Naive thymus-derived CD4-positive, alpha-beta T cell (primary cell): ENCODE measurements at regions of chr1 and their contacts with region 1.

Region 1: GRCh38 chr1:175154629-175155472 is 37.7 kb downstream of the KIAA0040 start:
- DNase-seq: peak; percentile 32 to 77 (median 63)
- ATAC-seq: peak; percentile 78
- H3K4me3 ChIP-seq: no peak overlapping the region
- H3K4me3 Mint-ChIP-seq: peak overlapping the region in 1 of 10 donors; percentile 7
- H3K27ac ChIP-seq: no peak overlapping the region
- H3K27ac Mint-ChIP-seq: no peak overlapping the region
- H3K4me1 ChIP-seq: peaks cover 0 to 9% of the 10 kb centered on the region in 2 donors
- H3K4me1 Mint-ChIP-seq: peaks cover 8 to 34% (median 20%) of the 10 kb centered on the region in 7 donors
- H3K27me3 ChIP-seq: no peaks in the 10 kb centered on the region
- H3K27me3 Mint-ChIP-seq: peaks cover 26 to 40% (median 38%) of the 10 kb centered on the region in 5 donors

Region 2: DNA sequence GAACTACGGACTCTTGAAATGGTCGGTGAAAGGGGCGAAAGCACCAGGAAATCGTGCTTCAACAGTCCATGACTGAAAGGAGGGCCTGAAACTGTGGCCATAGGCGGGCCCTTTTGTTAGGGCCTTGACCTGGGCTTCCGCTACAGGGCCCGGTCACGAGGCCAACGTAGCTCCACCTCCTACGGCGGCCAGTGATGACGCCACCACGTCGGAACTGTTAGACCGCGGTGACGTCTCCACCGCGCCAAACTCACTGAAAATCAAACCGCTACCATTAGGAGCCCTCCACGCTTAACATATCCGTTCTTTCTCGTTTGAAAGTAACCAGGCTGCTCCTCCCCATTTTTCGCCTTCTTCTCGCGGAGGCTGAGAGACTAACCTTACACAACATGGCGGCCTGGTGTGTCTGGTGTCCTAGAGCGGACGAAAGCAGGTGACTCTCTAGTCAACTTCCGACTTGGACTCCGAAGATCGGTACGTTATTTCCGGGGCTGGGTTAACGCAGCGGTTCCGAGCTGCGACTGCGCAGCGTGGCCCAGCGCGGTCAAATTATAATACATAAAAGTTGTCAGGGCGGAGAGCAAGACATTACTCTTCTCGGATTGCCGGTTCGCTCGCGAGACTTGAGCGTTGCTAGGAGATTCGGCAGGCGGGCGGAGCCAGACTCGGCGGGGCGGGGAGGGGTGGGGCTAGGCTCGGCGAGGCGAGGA is 155.5 kb before region 1 on chr1:
- CTCF ChIA-PET with region 1: no interaction called
- POLR2A ChIA-PET with region 1: no interaction called
- intact Hi-C with region 1: no loop called
- DNase-seq: peak; percentile 89 to 99 (median 98)
- ATAC-seq: peak; percentile 88
- H3K4me3 ChIP-seq: peak overlapping the region; percentile 72
- H3K4me3 Mint-ChIP-seq: no peak overlapping the region
- H3K27ac ChIP-seq: peak overlapping the region; percentile 99
- H3K27ac Mint-ChIP-seq: no peak overlapping the region
- H3K4me1 ChIP-seq: peaks cover 10 to 18% of the 10 kb centered on the region in 2 donors
- H3K4me1 Mint-ChIP-seq: peaks cover 34 to 43% (median 39%) of the 10 kb centered on the region in 7 donors
- H3K27me3 ChIP-seq: no peaks in the 10 kb centered on the region
- H3K27me3 Mint-ChIP-seq: no peaks in the 10 kb centered on the region

Region 3: DNA sequence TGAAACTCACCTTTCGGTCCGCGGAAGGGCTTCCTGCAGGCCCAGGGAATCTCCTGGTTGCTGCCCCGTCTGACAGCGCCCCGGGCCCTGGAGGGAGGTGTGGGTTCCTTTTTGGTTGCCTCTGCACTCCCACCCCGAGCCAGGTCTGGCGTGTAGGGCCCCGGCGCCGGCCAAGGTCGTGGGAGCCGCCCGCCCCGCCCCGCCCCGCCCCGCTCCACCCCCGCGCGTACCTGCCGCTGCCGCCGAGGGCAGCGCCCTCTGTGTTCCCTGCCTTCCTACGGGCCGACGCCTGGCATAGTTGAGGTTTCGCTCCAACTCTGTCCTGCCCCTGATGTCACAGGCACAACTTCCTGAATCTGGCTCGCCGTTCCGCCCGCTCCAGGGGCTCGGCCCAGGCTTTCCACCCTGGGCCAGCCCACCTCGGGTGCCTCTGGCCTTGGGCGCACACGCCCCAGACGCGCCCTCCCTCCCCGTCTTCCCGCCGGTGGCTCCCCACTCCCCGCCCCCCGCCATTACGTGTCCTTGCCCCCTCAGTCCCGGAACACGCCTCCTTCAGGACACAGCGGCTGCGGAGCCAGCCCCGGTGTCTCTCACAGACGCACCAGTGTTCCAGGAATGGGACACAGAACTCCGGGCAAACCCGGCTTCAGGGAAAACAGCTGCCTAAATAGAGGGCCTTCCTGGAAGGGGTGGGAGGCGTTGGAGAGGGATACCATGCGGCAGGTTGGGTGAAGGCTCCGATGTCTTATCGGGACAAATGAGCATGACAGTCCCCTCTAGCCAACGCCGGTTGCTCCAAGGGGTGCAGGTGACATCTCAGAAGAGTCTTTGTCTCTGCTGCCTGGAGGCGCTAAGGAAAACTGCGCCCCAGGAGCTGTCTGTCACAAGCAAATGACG is 38.0 kb after region 1 on chr1 and contains the start of gene KIAA0040:
- CTCF ChIA-PET with region 1: interaction called, 12 read pairs
- POLR2A ChIA-PET with region 1: no interaction called
- intact Hi-C with region 1: loop called (anchors 1 to 2 kb)
- DNase-seq: peak; percentile 25 to 66 (median 40)
- ATAC-seq: peak; percentile 78
- H3K4me3 ChIP-seq: peak within 1 kb of the TSS; percentile 90
- H3K4me3 Mint-ChIP-seq: peak within 1 kb of the TSS; percentile 89 to 100 (median 97)
- H3K27ac ChIP-seq: peak within 1 kb of the TSS; percentile 80
- H3K27ac Mint-ChIP-seq: peak within 1 kb of the TSS; percentile 73 to 97 (median 92)
- H3K4me1 ChIP-seq: peaks cover 38 to 43% of the 10 kb centered on the region in 2 donors
- H3K4me1 Mint-ChIP-seq: peaks cover 40 to 67% (median 53%) of the 10 kb centered on the region in 7 donors
- H3K27me3 ChIP-seq: no peaks in the 10 kb centered on the region
- H3K27me3 Mint-ChIP-seq: no peaks in the 10 kb centered on the region
- total RNA-seq, gene KIAA0040: 21.7 to 88.1 (median 27.0) TPM

Region 4: GRCh38 chr1:175319418-175320230 is 164.8 kb after region 1 on chr1:
- CTCF ChIA-PET with region 1: interaction called, 182 read pairs
- POLR2A ChIA-PET with region 1: interaction called, 4 read pairs
- intact Hi-C with region 1: loop called (anchors 1 kb)
- DNase-seq: peak; percentile 45 to 71 (median 62)
- ATAC-seq: peak; percentile 91
- H3K4me3 ChIP-seq: no peak overlapping the region
- H3K4me3 Mint-ChIP-seq: peak overlapping the region in 5 of 10 donors; percentile 8 to 44 (median 42)
- H3K27ac ChIP-seq: no peak overlapping the region
- H3K27ac Mint-ChIP-seq: no peak overlapping the region
- H3K4me1 ChIP-seq: peaks cover 4 to 5% of the 10 kb centered on the region in 2 donors
- H3K4me1 Mint-ChIP-seq: peaks cover 4 to 29% (median 18%) of the 10 kb centered on the region in 7 donors
- H3K27me3 ChIP-seq: no peaks in the 10 kb centered on the region
- H3K27me3 Mint-ChIP-seq: peaks cover 0 to 29% (median 5%) of the 10 kb centered on the region in 5 donors

Region 5: GRCh38 chr1:175434283-175434860 is 279.5 kb after region 1 on chr1:
- CTCF ChIA-PET with region 1: interaction called, 4 read pairs
- POLR2A ChIA-PET with region 1: no interaction called
- intact Hi-C with region 1: loop called (anchors 1 kb)
- DNase-seq: no peak
- ATAC-seq: no peak
- H3K4me3 ChIP-seq: no peak overlapping the region
- H3K4me3 Mint-ChIP-seq: no peak overlapping the region
- H3K27ac ChIP-seq: no peak overlapping the region
- H3K27ac Mint-ChIP-seq: no peak overlapping the region
- H3K4me1 ChIP-seq: no peaks in the 10 kb centered on the region
- H3K4me1 Mint-ChIP-seq: no peaks in the 10 kb centered on the region
- H3K27me3 ChIP-seq: no peaks in the 10 kb centered on the region
- H3K27me3 Mint-ChIP-seq: peaks cover 9 to 48% (median 34%) of the 10 kb centered on the region in 5 donors

Region 6: GRCh38 chr1:175824079-175824478 is 669.2 kb after region 1 on chr1:
- CTCF ChIA-PET with region 1: no interaction called
- POLR2A ChIA-PET with region 1: no interaction called
- intact Hi-C with region 1: loop called in 1 of 2 experiments (anchors 2 kb)
- DNase-seq: peak in 1 of 9 donors; percentile 1
- ATAC-seq: no peak
- H3K4me3 ChIP-seq: no peak overlapping the region
- H3K4me3 Mint-ChIP-seq: no peak overlapping the region
- H3K27ac ChIP-seq: no peak overlapping the region
- H3K27ac Mint-ChIP-seq: no peak overlapping the region
- H3K4me1 ChIP-seq: no peaks in the 10 kb centered on the region
- H3K4me1 Mint-ChIP-seq: no peaks in the 10 kb centered on the region
- H3K27me3 ChIP-seq: no peaks in the 10 kb centered on the region
- H3K27me3 Mint-ChIP-seq: peaks cover 9 to 30% (median 20%) of the 10 kb centered on the region in 5 donors

Region 7: GRCh38 chr1:176193023-176193422 is 1038.2 kb after region 1 on chr1:
- CTCF ChIA-PET with region 1: no interaction called
- POLR2A ChIA-PET with region 1: no interaction called
- intact Hi-C with region 1: no loop called
- DNase-seq: no peak
- ATAC-seq: no peak
- H3K4me3 ChIP-seq: no peak overlapping the region
- H3K4me3 Mint-ChIP-seq: peak overlapping the region in 3 of 10 donors; percentile 12 to 26 (median 23)
- H3K27ac ChIP-seq: no peak overlapping the region
- H3K27ac Mint-ChIP-seq: no peak overlapping the region
- H3K4me1 ChIP-seq: peaks cover 12 to 17% of the 10 kb centered on the region in 2 donors
- H3K4me1 Mint-ChIP-seq: peaks cover 45 to 96% (median 92%) of the 10 kb centered on the region in 7 donors
- H3K27me3 ChIP-seq: no peaks in the 10 kb centered on the region
- H3K27me3 Mint-ChIP-seq: no peaks in the 10 kb centered on the region

Region 8: GRCh38 chr1:176466514-176467220 is 1311.8 kb after region 1 on chr1:
- CTCF ChIA-PET with region 1: no interaction called
- POLR2A ChIA-PET with region 1: no interaction called
- intact Hi-C with region 1: loop called in 1 of 2 experiments (anchors 10 kb)
- DNase-seq: no peak
- ATAC-seq: no peak
- H3K4me3 ChIP-seq: no peak overlapping the region
- H3K4me3 Mint-ChIP-seq: no peak overlapping the region
- H3K27ac ChIP-seq: no peak overlapping the region
- H3K27ac Mint-ChIP-seq: no peak overlapping the region
- H3K4me1 ChIP-seq: no peaks in the 10 kb centered on the region
- H3K4me1 Mint-ChIP-seq: no peaks in the 10 kb centered on the region
- H3K27me3 ChIP-seq: no peaks in the 10 kb centered on the region
- H3K27me3 Mint-ChIP-seq: peaks cover 0 to 11% (median 8%) of the 10 kb centered on the region in 5 donors